CD8-positive, alpha-beta memory T cell (primary cell): ENCODE measurements at regions of chr11 and their contacts with region 1.

Region 1: GRCh38 chr11:67167086-67167485 is 48.0 kb downstream of the KDM2A start:
- DNase-seq: no peak
- H3K4me3 ChIP-seq: no peak overlapping the region
- H3K4me3 Mint-ChIP-seq: no peak overlapping the region
- H3K27ac ChIP-seq: no peak overlapping the region
- H3K27ac Mint-ChIP-seq: peak overlapping the region in 5 of 8 donors; percentile 8 to 75 (median 40)
- H3K4me1 ChIP-seq: no peaks in the 10 kb centered on the region
- H3K4me1 Mint-ChIP-seq: peaks cover 40 to 72% (median 72%) of the 10 kb centered on the region in 3 donors
- H3K27me3 ChIP-seq: no peaks in the 10 kb centered on the region
- H3K27me3 Mint-ChIP-seq: no peaks in the 10 kb centered on the region

Region 2: DNA sequence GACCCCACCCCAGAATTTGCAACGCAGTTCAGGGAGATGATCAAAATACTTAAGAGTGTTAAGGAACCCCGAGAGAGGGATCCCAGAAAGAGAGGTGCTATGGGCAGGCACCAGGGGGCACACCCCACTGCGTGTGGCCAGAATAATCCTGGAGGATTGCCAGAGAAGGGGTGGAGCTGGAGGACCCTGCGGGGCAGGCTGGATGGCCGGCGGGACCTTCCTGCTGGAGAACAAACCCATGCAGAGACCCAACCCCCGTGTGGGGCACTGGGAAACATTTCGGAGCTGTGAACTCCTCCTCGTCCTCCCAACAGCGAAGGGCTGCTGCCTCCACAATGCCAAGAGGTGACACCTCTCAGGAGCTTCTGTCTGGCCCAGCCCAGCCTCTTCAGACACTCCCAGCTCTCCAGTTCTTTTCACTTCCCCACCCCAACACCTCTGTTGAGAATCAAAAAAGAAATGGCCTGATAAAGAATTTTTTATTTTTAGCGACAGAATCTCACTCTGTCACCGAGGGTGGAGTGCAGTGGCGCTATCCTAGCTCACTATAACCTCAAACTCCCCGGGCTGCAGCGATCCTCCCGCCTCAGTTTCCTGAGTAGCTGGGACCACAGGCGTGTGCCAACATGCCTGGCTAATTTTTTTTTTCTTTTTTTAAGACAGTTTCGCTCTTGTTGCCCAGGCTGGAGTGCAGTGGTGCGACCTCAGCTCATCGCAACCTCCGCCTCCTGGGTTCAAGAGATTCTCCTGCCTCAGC is 84.9 kb before region 1 on chr11:
- CTCF ChIA-PET with region 1: interaction called, 11 read pairs
- POLR2A ChIA-PET with region 1: no interaction called
- DNase-seq: peak in 1 of 5 donors; percentile 9
- H3K4me3 ChIP-seq: peak overlapping the region; percentile 12
- H3K4me3 Mint-ChIP-seq: peak overlapping the region in 1 of 7 donors; percentile 33
- H3K27ac ChIP-seq: no peak overlapping the region
- H3K27ac Mint-ChIP-seq: peak overlapping the region in 2 of 8 donors; percentile 17 to 60
- H3K4me1 ChIP-seq: peaks cover 10% of the 10 kb centered on the region
- H3K4me1 Mint-ChIP-seq: peaks cover 6 to 14% (median 6%) of the 10 kb centered on the region in 3 donors
- H3K27me3 ChIP-seq: no peaks in the 10 kb centered on the region
- H3K27me3 Mint-ChIP-seq: peaks cover 4 to 7% of the 10 kb centered on the region in 2 donors

Region 3: DNA sequence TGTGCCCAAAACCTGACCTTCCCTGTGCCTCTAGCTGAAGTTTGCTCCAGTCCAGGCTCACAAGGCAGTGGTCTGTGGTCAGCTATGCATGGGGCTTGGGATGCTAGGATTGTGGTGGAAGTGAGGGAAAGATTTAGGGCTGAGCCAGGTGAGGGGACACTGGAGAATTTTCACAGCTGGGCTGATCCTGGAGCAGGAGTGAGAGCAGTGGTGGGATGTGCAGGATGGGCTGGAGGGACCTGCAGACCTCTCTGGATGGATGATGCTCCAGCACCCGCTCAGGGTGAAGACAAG is 71.9 kb before region 1 on chr11:
- CTCF ChIA-PET with region 1: interaction called, 11 read pairs
- POLR2A ChIA-PET with region 1: no interaction called
- DNase-seq: no peak
- H3K4me3 ChIP-seq: no peak overlapping the region
- H3K4me3 Mint-ChIP-seq: no peak overlapping the region
- H3K27ac ChIP-seq: no peak overlapping the region
- H3K27ac Mint-ChIP-seq: no peak overlapping the region
- H3K4me1 ChIP-seq: no peaks in the 10 kb centered on the region
- H3K4me1 Mint-ChIP-seq: peaks cover 3 to 5% (median 5%) of the 10 kb centered on the region in 3 donors
- H3K27me3 ChIP-seq: no peaks in the 10 kb centered on the region
- H3K27me3 Mint-ChIP-seq: peaks cover 5% of the 10 kb centered on the region in 2 donors

Region 4: DNA sequence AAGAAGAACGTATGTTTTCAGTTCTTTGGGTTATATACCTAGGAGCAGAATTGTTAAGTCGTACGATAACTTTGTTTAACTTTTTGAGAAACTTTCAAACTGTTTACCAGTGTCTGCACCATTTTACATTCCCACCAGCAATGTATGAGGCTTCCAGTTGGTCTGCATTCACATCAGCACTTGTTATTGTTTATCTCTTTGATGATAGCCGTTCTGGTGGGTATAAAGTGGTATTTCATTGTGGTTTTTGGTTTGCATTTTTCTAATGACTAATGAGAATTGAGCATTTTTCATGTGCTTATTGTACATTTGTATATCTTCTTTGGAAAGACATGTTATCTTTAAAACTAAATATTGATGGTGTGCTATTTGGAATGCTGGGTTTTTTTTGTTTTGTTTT is 11.8 kb after region 1 on chr11:
- CTCF ChIA-PET with region 1: no interaction called
- POLR2A ChIA-PET with region 1: no interaction called
- DNase-seq: no peak
- H3K4me3 ChIP-seq: no peak overlapping the region
- H3K4me3 Mint-ChIP-seq: no peak overlapping the region
- H3K27ac ChIP-seq: no peak overlapping the region
- H3K27ac Mint-ChIP-seq: peak overlapping the region in 3 of 8 donors; percentile 11 to 75 (median 43)
- H3K4me1 ChIP-seq: peaks cover 3% of the 10 kb centered on the region
- H3K4me1 Mint-ChIP-seq: peaks cover 24 to 50% (median 50%) of the 10 kb centered on the region in 3 donors
- H3K27me3 ChIP-seq: no peaks in the 10 kb centered on the region
- H3K27me3 Mint-ChIP-seq: no peaks in the 10 kb centered on the region

Region 5: DNA sequence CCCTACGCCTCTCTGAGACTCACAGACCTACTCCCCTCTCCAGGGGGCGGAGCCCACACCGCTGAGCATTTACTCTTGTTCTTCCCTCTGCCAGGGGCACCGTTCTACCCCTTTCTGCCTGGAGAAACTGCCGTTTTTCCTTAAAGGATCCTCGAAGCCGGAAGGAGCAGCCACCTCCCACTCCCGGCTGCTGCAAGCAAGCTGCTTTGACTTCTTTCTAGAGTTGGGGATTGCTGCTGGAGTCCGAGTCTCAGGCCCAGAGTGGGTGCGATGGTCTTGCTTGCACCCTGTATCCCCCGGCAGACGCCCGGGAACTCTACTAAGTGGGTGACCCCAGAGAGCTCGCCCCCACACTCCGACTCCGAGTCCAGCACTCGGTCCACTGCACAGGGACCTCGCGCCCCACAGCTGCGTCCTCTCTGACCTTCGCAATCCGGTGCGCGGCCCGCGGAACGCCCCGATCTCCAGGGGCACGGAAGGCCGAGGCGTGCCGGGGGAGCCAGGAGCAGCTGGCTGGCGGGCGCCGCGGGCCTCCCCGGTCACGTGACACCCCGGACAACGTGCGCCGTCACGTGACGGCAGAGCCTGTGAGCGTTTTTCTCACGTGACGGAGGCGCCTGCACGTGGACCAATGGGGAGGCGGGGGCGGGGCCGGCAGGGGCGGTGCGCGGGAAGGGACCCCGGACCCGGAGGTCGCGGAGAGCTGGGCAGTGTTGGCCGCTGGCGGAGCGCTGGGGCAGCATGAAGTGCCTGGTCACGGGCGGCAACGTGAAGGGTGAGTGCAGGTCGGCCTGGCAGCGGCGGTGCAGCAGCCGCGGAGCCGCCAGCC is 224.4 kb after region 1 on chr11 and contains the start of gene RAD9A:
- CTCF ChIA-PET with region 1: no interaction called
- POLR2A ChIA-PET with region 1: no interaction called
- DNase-seq: peak; percentile 88 to 96 (median 94)
- H3K4me3 ChIP-seq: peak within 1 kb of the TSS; percentile 96
- H3K4me3 Mint-ChIP-seq: peak within 1 kb of the TSS; percentile 86 to 94 (median 87)
- H3K27ac ChIP-seq: peak within 1 kb of the TSS; percentile 83
- H3K27ac Mint-ChIP-seq: peak within 1 kb of the TSS; percentile 80 to 96 (median 88)
- H3K4me1 ChIP-seq: peaks cover 25% of the 10 kb centered on the region
- H3K4me1 Mint-ChIP-seq: peaks cover 30 to 48% (median 36%) of the 10 kb centered on the region in 3 donors
- H3K27me3 ChIP-seq: no peaks in the 10 kb centered on the region
- H3K27me3 Mint-ChIP-seq: no peaks in the 10 kb centered on the region
- total RNA-seq, gene RAD9A: 36.8 to 38.8 TPM

Region 6: DNA sequence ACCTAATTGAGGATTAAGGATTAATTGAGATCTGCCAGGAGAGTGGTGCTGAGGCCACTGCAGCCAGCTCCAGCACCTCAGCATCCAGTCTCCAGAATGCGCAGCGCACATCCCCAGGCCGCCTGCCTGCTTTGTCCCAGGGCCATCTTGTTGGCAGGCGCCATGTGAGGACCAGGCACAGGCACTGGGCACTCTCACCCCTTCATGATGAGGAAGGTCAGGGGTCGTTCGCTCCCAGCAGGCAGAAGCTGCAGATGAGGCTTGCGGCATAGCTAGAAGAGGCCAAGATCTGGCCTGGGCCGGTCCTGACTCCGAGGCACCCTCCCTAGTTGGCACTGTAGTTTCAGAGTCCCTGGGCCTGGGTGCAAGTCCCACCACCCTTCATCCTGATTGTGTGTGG is 349.7 kb after region 1 on chr11:
- CTCF ChIA-PET with region 1: no interaction called
- POLR2A ChIA-PET with region 1: no interaction called
- DNase-seq: peak in 1 of 5 donors; percentile 31
- H3K4me3 ChIP-seq: no peak overlapping the region
- H3K4me3 Mint-ChIP-seq: no peak overlapping the region
- H3K27ac ChIP-seq: no peak overlapping the region
- H3K27ac Mint-ChIP-seq: no peak overlapping the region
- H3K4me1 ChIP-seq: no peaks in the 10 kb centered on the region
- H3K4me1 Mint-ChIP-seq: no peaks in the 10 kb centered on the region
- H3K27me3 ChIP-seq: no peaks in the 10 kb centered on the region
- H3K27me3 Mint-ChIP-seq: peaks cover 0 to 21% of the 10 kb centered on the region in 2 donors